ENCODE measurements at regions of chr2 and their contacts with region 1.

Region 1: DNA sequence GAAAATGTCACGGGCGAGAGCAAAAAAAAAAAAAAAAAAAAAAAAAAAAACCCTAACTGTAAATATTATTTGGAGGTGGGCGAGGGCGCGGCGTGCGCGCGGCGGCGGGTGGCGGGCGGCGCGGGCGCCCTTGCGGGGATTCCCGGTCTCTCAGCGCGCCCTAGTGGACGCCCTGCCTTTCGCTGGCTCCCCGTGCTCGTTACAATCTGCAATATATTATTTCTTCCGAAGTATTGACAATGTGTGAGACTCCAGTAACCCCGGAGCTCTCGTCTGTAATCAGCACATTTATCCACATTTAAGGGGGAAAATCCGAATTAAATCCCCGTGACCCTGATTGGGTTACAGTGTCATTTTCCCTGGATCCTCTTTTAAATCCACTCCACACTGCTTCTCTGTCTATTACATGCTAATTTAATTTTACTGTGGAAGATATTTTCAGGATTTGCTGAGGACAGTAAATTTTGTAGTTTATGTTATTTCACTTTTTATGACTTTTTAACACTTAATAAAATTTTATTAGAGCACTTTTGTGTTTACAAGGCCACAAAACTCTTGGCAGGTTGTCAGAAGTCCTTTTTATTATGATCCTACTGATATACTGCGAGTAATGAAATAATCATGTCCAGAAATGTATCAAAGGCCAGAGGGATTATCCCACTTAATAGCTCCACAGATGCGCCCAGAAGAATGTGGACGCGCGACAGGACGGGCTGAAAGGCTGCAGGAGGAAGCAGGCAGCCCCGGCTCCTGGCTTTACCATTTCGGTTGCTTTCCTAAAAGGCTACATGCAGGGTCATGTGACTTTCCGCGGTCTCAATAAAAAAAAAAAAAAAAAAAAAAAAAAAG is 369.1 kb downstream of the MTX2 start:
- DNase-seq: peak; percentile 19 to 71 (median 45)
- ATAC-seq: peak; percentile 80
- H3K4me3 ChIP-seq: peak overlapping the region; percentile 42
- H3K4me3 Mint-ChIP-seq: peak overlapping the region; percentile 62
- H3K27ac ChIP-seq: no peak overlapping the region
- H3K27ac Mint-ChIP-seq: no peak overlapping the region
- H3K4me1 ChIP-seq: peaks cover 10% of the 10 kb centered on the region
- H3K4me1 Mint-ChIP-seq: peaks cover 8% of the 10 kb centered on the region
- H3K27me3 ChIP-seq: peaks cover 26 to 79% of the 10 kb centered on the region in 2 experiments
- H3K27me3 Mint-ChIP-seq: peaks cover 81% of the 10 kb centered on the region
- CTCF ChIP-seq: peak; percentile 41

Region 2: DNA sequence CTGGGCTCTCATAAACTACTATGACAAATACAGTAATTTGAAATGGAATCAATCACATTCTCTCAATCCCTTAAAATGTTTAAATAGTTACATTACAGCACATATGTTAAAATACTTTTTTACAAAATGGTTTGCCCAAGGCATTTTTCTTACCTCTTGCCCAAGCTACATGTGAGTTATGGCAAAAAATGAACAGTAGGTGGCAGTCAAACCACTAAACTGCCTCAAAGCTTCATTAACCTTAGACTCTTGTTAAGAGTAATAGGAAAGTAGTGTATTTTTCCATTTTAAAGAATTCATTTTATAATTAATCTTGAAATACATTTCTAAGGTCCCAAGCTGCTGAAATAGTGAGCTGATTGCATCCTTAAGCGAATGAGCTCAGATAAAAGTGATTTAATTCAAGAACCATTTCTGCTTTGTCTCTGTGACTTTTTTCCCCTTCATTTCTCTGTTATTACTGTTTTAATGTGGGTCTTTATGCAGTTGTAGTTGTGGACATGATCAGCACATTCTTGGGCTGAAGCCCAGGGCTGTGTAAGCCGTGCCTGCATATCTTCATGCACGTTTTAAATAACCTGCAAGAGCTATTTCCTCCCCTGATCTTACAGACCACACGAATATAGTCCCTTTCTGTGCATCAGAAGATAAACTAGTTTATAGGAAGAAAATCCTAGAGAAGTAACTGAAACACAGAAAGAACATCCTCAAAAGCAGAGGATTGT is 948.1 kb before region 1 on chr2:
- CTCF ChIA-PET with region 1: no interaction called
- POLR2A ChIA-PET with region 1: no interaction called
- intact Hi-C with region 1: loop called in 1 of 2 experiments (anchors 2 kb)
- DNase-seq: peak in 4 of 14 experiments; percentile 18 to 67 (median 56)
- ATAC-seq: peak; percentile 55
- H3K4me3 ChIP-seq: no peak overlapping the region
- H3K4me3 Mint-ChIP-seq: no peak overlapping the region
- H3K27ac ChIP-seq: no peak overlapping the region
- H3K27ac Mint-ChIP-seq: no peak overlapping the region
- H3K4me1 ChIP-seq: no peaks in the 10 kb centered on the region
- H3K4me1 Mint-ChIP-seq: no peaks in the 10 kb centered on the region
- H3K27me3 ChIP-seq: peaks cover 8% of the 10 kb centered on the region in 2 experiments
- H3K27me3 Mint-ChIP-seq: peaks cover 50% of the 10 kb centered on the region
- CTCF ChIP-seq: peak; percentile 71